ENCODE measurements at regions of chr5 and their contacts with region 1.

Region 1: GRCh38 chr5:170338933-170339779 is 41.6 kb upstream of the LCP2 start:
- DNase-seq: peak; percentile 82
- ATAC-seq: peak; percentile 76
- H3K4me3 Mint-ChIP-seq: no peak overlapping the region
- H3K27ac Mint-ChIP-seq: no peak overlapping the region
- H3K4me1 Mint-ChIP-seq: peaks cover 36% of the 10 kb centered on the region
- H3K27me3 Mint-ChIP-seq: no peaks in the 10 kb centered on the region

Region 2: GRCh38 chr5:170235876-170236864 is 103.0 kb before region 1 on chr5:
- CTCF ChIA-PET with region 1: interaction called, 18 read pairs
- DNase-seq: no peak
- ATAC-seq: no peak
- H3K4me3 Mint-ChIP-seq: no peak overlapping the region
- H3K27ac Mint-ChIP-seq: no peak overlapping the region
- H3K4me1 Mint-ChIP-seq: no peaks in the 10 kb centered on the region
- H3K27me3 Mint-ChIP-seq: no peaks in the 10 kb centered on the region

Region 3: GRCh38 chr5:170253844-170254455 is 85.2 kb before region 1 on chr5:
- CTCF ChIA-PET with region 1: interaction called, 13 read pairs
- DNase-seq: peak; percentile 87
- ATAC-seq: peak; percentile 95
- H3K4me3 Mint-ChIP-seq: no peak overlapping the region
- H3K27ac Mint-ChIP-seq: peak overlapping the region; percentile 70
- H3K4me1 Mint-ChIP-seq: peaks cover 82% of the 10 kb centered on the region
- H3K27me3 Mint-ChIP-seq: no peaks in the 10 kb centered on the region

Region 4: DNA sequence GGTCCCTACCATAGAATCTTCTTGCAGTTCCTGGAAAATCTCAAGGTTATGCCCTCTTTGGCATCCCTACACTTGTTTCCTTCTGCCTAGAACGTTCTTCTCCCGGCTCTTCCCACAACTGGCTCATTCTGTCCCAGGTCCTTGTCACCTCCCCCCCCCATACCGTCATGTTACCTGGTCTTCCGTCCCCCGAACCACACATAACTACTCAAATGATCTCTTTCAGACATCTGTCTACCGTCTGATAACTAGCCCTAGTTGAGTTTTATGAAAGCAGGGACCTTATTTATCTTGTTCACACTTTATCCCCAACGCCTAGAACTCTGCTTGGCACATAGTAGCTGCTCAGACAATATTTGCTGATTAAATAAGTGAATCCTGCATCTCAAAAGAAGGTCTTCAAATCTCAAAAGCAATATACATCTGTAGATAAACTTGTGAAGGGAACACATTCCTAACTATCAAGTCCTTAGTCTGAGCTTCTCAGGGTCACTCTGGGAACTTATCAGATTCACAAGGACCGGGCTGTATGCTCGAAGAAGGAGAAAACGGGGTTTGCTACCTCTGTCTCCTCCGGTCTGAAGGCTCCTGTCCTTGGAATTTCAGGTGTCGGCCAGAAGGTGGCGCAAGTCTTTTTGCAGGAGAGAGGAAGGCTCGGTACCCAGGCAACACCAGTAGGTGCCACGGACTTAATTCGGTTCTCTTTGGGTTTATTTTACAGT is 71.6 kb before region 1 on chr5:
- CTCF ChIA-PET with region 1: interaction called, 122 read pairs
- DNase-seq: peak; percentile 90
- ATAC-seq: peak; percentile 45
- H3K4me3 Mint-ChIP-seq: peak overlapping the region; percentile 61
- H3K27ac Mint-ChIP-seq: peak overlapping the region; percentile 87
- H3K4me1 Mint-ChIP-seq: peaks cover 96% of the 10 kb centered on the region
- H3K27me3 Mint-ChIP-seq: no peaks in the 10 kb centered on the region

Region 5: DNA sequence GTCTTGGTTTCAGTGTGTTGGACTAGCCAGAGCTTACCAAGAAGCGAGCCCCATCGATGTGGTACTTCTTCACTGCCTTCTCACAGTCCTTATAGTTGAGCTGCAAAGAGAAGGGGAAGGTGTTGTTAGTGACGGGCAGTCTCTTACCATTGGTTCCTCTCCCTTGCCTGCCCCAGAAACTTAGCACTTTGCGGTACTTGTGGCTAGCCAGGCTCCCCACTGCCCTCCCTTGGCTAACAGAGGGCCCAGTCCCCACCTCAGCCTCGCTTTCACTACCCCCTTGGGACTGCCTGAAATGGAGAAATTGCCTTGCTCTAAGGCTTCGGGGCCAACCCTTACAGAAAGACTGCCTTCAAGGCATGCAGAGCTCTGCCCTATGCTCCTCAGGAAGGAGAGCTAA is 45.9 kb before region 1 on chr5:
- CTCF ChIA-PET with region 1: interaction called, 234 read pairs
- DNase-seq: peak; percentile 95
- ATAC-seq: peak; percentile 62
- H3K4me3 Mint-ChIP-seq: peak overlapping the region; percentile 95
- H3K27ac Mint-ChIP-seq: peak overlapping the region; percentile 95
- H3K4me1 Mint-ChIP-seq: peaks cover 63% of the 10 kb centered on the region
- H3K27me3 Mint-ChIP-seq: no peaks in the 10 kb centered on the region

Region 6: DNA sequence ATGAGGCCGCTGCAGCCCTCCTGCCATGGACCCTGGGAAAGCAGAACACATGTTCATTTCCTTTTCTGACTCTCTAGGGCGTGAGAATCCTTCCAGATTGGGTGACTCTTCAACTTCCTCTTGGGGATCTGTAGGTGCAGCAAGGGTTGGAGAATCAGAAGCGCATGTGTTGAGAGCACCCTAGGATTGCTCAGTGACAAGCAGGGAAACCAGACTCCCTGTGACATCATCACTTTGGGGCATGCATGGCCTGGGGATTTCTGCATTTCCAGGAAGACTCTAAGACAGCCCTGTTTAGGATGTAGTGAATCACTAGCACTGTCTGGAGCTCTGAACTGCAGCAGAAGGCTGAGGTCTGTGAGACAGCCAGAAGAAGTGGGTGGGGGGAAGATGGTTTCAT is 26.5 kb before region 1 on chr5:
- CTCF ChIA-PET with region 1: interaction called, 14 read pairs
- DNase-seq: peak; percentile 70
- ATAC-seq: peak; percentile 70
- H3K4me3 Mint-ChIP-seq: peak overlapping the region; percentile 32
- H3K27ac Mint-ChIP-seq: peak overlapping the region; percentile 73
- H3K4me1 Mint-ChIP-seq: peaks cover 31% of the 10 kb centered on the region
- H3K27me3 Mint-ChIP-seq: no peaks in the 10 kb centered on the region

Measured in activated CD8-positive, alpha-beta memory T cell treated with anti-CD3 and anti-CD28 coated beads, Interleukin-2, amount 10 ng/mL, durations not matched to agents 7 days and 5 days (primary cell).